ENCODE measurements at regions of chr15 and their contacts with region 1.

Region 1: DNA sequence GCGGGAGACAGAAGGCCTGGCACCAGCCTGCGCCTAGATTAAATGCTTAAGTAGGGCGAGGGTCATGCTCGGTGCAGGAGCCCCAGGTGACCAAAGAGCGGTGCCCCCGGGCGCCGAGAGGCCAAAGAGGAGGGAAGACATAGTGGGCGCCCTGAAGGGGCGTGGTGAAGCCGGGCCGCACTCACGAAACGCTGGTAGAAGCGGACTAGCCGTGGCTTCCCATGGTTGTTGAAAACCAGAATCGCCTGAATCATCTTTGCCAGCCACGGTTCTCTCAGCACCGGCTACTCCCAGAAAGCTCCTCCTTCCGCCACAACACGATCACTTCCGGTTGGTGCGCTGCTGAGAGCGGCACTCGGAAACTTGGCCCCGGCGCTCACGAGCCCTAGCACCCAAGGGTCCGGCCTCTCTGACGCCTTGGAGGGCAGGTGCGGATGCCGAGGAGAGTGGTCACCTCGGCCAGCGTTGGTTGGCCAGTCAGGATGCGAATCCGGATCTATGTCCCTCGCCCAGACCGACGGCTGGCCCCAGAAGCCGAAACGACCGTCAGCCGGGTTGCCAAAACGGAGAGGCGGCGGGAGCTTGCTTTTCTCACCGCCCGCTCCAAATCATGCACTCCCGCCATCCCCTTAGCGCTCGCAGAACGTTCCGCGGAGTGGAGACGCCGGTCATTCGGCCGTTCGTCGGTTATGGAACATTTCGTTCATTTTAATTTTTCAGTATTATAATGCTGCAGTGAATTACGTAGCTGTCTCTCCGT is at the start of gene AP3S2:
- DNase-seq: peak; percentile 86
- H3K4me3 Mint-ChIP-seq: peak within 1 kb of the TSS; percentile 98
- H3K27ac Mint-ChIP-seq: peak within 1 kb of the TSS; percentile 97
- H3K4me1 Mint-ChIP-seq: peaks cover 28% of the 10 kb centered on the region
- H3K27me3 Mint-ChIP-seq: no peaks in the 10 kb centered on the region
- total RNA-seq, gene AP3S2: 20.6 and 24.6 TPM in 2 replicates

Region 2: GRCh38 chr15:89750560-89751542 is 143.0 kb before region 1 on chr15 and contains the start of gene MESP1:
- intact Hi-C with region 1: loop called (anchors 5 kb)
- DNase-seq: peak; percentile 83
- H3K4me3 Mint-ChIP-seq: peak within 1 kb of the TSS; percentile 81
- H3K27ac Mint-ChIP-seq: no peak within 1 kb of the TSS
- H3K4me1 Mint-ChIP-seq: peaks cover 3% of the 10 kb centered on the region
- H3K27me3 Mint-ChIP-seq: peaks cover 33% of the 10 kb centered on the region
- total RNA-seq, gene MESP1: 7.1 and 7.5 TPM in 2 replicates

Region 3: DNA sequence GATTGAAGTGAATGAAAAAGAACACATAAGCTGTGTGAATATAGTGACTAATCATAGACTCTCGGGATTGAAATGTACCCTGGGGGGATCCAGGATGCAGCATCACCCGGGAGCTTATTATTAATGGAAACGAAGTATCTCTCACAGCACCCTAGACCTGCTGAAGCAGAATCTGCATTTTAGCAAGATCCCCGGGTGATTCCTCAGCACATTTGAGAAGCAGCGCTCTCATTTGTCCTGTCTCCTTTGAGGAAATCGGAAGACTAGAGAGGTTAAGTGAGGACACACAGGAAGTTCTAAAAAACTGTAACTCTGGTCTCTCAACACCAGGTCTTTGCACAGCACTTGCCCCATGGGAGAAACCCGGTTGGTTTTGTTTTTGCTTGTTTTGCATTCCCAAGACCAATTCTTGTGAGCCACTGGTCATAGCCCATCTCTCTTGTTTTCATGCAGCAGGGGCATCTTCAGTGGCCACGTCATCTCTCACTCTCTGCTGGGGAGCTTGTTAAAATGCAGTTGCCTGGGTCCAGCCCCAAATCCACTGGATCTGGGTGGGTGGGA is 137.4 kb after region 1 on chr15:
- intact Hi-C with region 1: loop called (anchors 10 kb)
- DNase-seq: no peak
- H3K4me3 Mint-ChIP-seq: peak overlapping the region; percentile 30
- H3K27ac Mint-ChIP-seq: peak overlapping the region; percentile 84
- H3K4me1 Mint-ChIP-seq: peaks cover 52% of the 10 kb centered on the region
- H3K27me3 Mint-ChIP-seq: no peaks in the 10 kb centered on the region

Region 4: GRCh38 chr15:90099868-90100831 is 206.3 kb after region 1 on chr15:
- intact Hi-C with region 1: loop called (anchors 5 kb)
- DNase-seq: no peak
- H3K4me3 Mint-ChIP-seq: peak overlapping the region; percentile 90
- H3K27ac Mint-ChIP-seq: peak overlapping the region; percentile 91
- H3K4me1 Mint-ChIP-seq: peaks cover 67% of the 10 kb centered on the region
- H3K27me3 Mint-ChIP-seq: peaks cover 7% of the 10 kb centered on the region

Region 5: GRCh38 chr15:90201130-90201949 is 307.5 kb after region 1 on chr15 and contains the start of gene SEMA4B:
- intact Hi-C with region 1: no loop called
- DNase-seq: peak; percentile 72
- H3K4me3 Mint-ChIP-seq: peak within 1 kb of the TSS; percentile 83
- H3K27ac Mint-ChIP-seq: peak within 1 kb of the TSS; percentile 67
- H3K4me1 Mint-ChIP-seq: peaks cover 27% of the 10 kb centered on the region
- H3K27me3 Mint-ChIP-seq: no peaks in the 10 kb centered on the region
- total RNA-seq, gene SEMA4B: 28.3 and 30.2 TPM in 2 replicates

Region 6: GRCh38 chr15:90286678-90287077 is 392.8 kb after region 1 on chr15:
- intact Hi-C with region 1: no loop called
- DNase-seq: no peak
- H3K4me3 Mint-ChIP-seq: no peak overlapping the region
- H3K27ac Mint-ChIP-seq: no peak overlapping the region
- H3K4me1 Mint-ChIP-seq: peaks cover 1% of the 10 kb centered on the region
- H3K27me3 Mint-ChIP-seq: peaks cover 2% of the 10 kb centered on the region

Region 7: DNA sequence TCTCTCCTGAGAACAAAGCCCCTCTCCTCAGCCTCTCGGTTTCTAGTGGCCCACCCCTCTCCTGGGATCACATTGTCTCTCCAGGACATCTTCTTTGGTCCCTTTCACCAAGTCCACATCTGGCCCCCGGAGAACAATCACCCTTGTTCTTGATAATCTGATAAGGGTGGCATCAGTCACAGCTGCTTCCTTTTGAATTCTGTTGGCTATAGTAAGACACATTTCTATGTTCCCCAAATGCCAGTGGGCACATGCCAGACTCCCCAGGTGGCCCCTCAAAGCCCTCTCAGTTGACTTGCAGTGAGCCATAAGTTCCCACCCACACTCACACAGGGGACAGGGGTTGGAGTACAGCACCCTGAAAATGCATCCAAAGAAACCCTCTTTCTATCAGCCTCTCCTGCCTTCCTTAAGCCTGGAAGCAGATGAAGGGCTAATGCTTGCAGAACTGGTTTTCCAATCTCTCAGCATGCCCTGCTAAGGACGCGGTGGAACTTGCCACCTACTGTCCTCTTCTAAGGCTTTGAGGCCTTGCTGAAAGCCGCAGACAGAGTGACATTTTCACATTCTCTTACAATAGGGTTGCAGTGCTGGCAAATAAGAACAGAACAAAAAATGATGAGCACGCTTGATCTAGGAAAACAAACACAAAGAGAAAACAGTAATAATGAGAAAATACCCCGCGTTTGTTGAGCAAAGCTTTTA is 1858.4 kb after region 1 on chr15:
- intact Hi-C with region 1: no loop called
- DNase-seq: no peak
- H3K4me3 Mint-ChIP-seq: no peak overlapping the region
- H3K27ac Mint-ChIP-seq: no peak overlapping the region
- H3K4me1 Mint-ChIP-seq: no peaks in the 10 kb centered on the region
- H3K27me3 Mint-ChIP-seq: peaks cover 2% of the 10 kb centered on the region